Mammary epithelial cell (primary cell): ENCODE measurements at regions of chr5 and their contacts with region 1.

Region 1: GRCh38 chr5:133423618-133424282 is 188.6 kb downstream of the FSTL4 start:
- DNase-seq: peak; percentile 69
- H3K4me3 ChIP-seq: no peak overlapping the region
- H3K27ac ChIP-seq: peak overlapping the region; percentile 11
- H3K4me1 ChIP-seq: peaks cover 21% of the 10 kb centered on the region
- H3K27me3 ChIP-seq: no peaks in the 10 kb centered on the region
- CTCF ChIP-seq: peak; percentile 72 to 75

Region 2: GRCh38 chr5:133189911-133190310 is 233.8 kb before region 1 on chr5:
- CTCF ChIA-PET with region 1: interaction called, 10 read pairs
- dilution Hi-C with region 1: no loop called
- in situ Hi-C with region 1: no loop called
- intact Hi-C with region 1: no loop called
- DNase-seq: no peak
- H3K4me3 ChIP-seq: no peak overlapping the region
- H3K27ac ChIP-seq: no peak overlapping the region
- H3K4me1 ChIP-seq: peaks cover 6% of the 10 kb centered on the region
- H3K27me3 ChIP-seq: no peaks in the 10 kb centered on the region
- CTCF ChIP-seq: no peak

Region 3: DNA sequence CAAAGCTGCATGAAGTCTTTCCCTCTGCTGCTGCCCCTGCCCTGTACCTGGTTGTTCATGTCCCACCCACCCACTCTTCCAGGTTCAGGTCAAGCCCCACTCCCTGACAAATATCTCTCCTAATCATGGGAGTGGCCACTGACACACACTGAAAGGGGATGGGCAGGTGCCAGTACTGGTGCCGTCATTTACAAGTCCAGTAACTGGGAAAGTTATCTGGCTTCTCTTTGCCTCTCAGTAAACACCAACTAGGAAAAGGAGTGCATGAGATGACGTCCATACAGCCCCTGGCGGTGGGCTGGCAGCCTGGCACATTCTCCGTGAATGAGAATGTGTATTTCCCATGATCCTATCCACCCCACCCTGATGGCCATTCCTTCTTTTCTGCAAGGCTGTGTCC is 36.7 kb before region 1 on chr5:
- CTCF ChIA-PET with region 1: interaction called, 11 read pairs
- dilution Hi-C with region 1: no loop called
- in situ Hi-C with region 1: no loop called
- intact Hi-C with region 1: no loop called
- DNase-seq: no peak
- H3K4me3 ChIP-seq: no peak overlapping the region
- H3K27ac ChIP-seq: no peak overlapping the region
- H3K4me1 ChIP-seq: peaks cover 7% of the 10 kb centered on the region
- H3K27me3 ChIP-seq: no peaks in the 10 kb centered on the region
- CTCF ChIP-seq: no peak

Region 4: GRCh38 chr5:133445744-133446143 is 22.0 kb after region 1 on chr5:
- CTCF ChIA-PET with region 1: no interaction called
- dilution Hi-C with region 1: no loop called
- in situ Hi-C with region 1: no loop called
- intact Hi-C with region 1: no loop called
- DNase-seq: no peak
- H3K4me3 ChIP-seq: no peak overlapping the region
- H3K27ac ChIP-seq: no peak overlapping the region
- H3K4me1 ChIP-seq: peaks cover 3% of the 10 kb centered on the region
- H3K27me3 ChIP-seq: no peaks in the 10 kb centered on the region
- CTCF ChIP-seq: no peak

Region 5: DNA sequence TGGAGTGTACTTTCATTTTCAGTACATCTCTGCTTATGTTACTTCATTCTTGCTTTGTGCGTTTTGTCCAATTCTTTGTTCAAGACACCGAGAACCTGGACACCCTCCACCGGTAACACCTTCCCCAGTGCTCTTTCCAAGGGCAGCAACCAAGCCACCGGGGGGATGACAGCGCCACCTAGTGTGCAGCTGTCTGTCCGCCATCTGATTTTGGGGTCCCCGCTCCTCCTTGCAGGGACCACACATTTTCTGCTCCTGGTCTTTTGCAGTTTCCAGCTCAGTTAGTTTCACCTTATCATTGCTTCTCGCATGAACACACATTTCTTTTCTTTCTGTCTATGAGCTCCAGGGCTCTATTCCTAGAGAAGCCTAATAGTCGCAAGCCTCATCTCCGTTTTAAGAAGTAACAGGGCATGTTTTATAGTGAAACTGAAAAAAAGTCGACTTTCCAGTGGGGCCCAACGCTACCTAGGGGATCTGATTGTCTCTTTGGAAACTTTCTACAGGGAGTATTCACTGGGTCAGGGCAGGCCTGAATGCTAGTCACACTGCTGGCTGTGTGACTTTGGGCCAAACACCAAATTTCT is 36.5 kb after region 1 on chr5:
- CTCF ChIA-PET with region 1: interaction called, 5 read pairs
- dilution Hi-C with region 1: no loop called
- in situ Hi-C with region 1: no loop called
- intact Hi-C with region 1: loop called (anchors 1 kb)
- DNase-seq: peak; percentile 20
- H3K4me3 ChIP-seq: no peak overlapping the region
- H3K27ac ChIP-seq: no peak overlapping the region
- H3K4me1 ChIP-seq: peaks cover 10% of the 10 kb centered on the region
- H3K27me3 ChIP-seq: no peaks in the 10 kb centered on the region
- CTCF ChIP-seq: peak; percentile 82 to 96